ENCODE measurements at regions of chr11 and their contacts with region 1.

Region 1: GRCh38 chr11:129695575-129696308 is 119.9 kb upstream of the TMEM45B start:
- DNase-seq: peak; percentile 87
- ATAC-seq: peak; percentile 94
- H3K4me3 Mint-ChIP-seq: peak overlapping the region; percentile 66
- H3K27ac Mint-ChIP-seq: no peak overlapping the region
- H3K4me1 Mint-ChIP-seq: no peaks in the 10 kb centered on the region
- H3K27me3 Mint-ChIP-seq: peaks cover 12% of the 10 kb centered on the region
- CTCF ChIP-seq: peak; percentile 81

Region 2: DNA sequence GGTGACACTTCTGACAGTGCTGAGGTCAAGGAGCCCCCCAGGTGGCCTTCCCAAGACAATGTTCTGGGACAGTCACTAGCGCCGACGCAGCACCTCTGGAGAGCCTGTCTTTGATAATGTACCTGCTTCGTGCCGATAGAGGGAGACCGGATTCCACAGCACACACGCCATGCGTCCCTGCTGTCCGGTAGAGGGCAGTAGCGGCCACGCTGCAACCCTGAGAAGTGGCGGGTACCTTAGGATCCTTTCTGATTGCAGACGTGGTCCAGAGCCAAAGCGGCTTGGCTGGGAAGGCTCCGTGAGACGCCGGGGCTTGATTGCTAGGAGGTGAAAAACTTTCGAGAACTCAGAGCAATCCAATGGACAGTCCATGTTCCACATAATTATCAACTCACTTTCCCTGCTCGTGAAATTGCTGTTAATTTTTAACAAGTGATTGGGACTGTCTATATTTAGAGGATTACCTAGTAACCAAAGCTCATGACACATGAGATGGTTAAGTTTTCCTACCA is 331.5 kb before region 1 on chr11:
- CTCF ChIA-PET with region 1: interaction called, 15 read pairs
- POLR2A ChIA-PET with region 1: no interaction called
- DNase-seq: peak; percentile 92
- ATAC-seq: peak; percentile 100
- H3K4me3 Mint-ChIP-seq: no peak overlapping the region
- H3K27ac Mint-ChIP-seq: no peak overlapping the region
- H3K4me1 Mint-ChIP-seq: 0 out of 2 replicates have a peak, but pooled peaks cover 4% of the 10 kb centered on the region
- H3K27me3 Mint-ChIP-seq: peaks cover 32% of the 10 kb centered on the region
- CTCF ChIP-seq: peak; percentile 90

Region 3: GRCh38 chr11:129375751-129376657 is 319.7 kb before region 1 on chr11 and contains the start of gene BARX2:
- CTCF ChIA-PET with region 1: interaction called, 52 read pairs
- POLR2A ChIA-PET with region 1: no interaction called
- DNase-seq: peak; percentile 74
- ATAC-seq: peak; percentile 61
- H3K4me3 Mint-ChIP-seq: peak within 1 kb of the TSS; percentile 76
- H3K27ac Mint-ChIP-seq: no peak within 1 kb of the TSS
- H3K4me1 Mint-ChIP-seq: peaks cover 27% of the 10 kb centered on the region
- H3K27me3 Mint-ChIP-seq: peaks cover 88% of the 10 kb centered on the region
- CTCF ChIP-seq: no peak
- total RNA-seq, gene BARX2: not detected in 3 replicates

Region 4: GRCh38 chr11:129574431-129574830 is 121.3 kb before region 1 on chr11:
- CTCF ChIA-PET with region 1: no interaction called
- POLR2A ChIA-PET with region 1: no interaction called
- DNase-seq: no peak
- ATAC-seq: no peak
- H3K4me3 Mint-ChIP-seq: no peak overlapping the region
- H3K27ac Mint-ChIP-seq: no peak overlapping the region
- H3K4me1 Mint-ChIP-seq: no peaks in the 10 kb centered on the region
- H3K27me3 Mint-ChIP-seq: no peaks in the 10 kb centered on the region; the same call in 1 of the 2 replicates
- CTCF ChIP-seq: no peak

Region 5: DNA sequence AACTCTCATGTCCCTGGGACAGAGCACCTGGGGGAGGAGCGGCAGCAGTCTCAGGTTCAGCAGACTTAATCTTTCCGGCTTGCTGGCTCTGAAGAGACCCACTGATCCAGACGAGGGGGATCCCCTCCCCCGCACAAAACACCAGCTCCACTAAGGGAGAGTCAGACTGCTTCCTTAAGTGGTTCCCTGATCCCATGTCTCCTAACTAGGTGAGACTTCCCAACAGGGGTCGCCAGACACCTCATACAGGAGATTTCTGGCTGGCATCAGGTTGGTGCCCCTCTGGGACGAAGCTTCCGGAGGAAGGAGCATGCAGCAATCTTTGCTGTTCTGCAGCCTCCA is 37.2 kb before region 1 on chr11:
- CTCF ChIA-PET with region 1: interaction called, 28 read pairs
- POLR2A ChIA-PET with region 1: no interaction called
- DNase-seq: peak; percentile 47
- ATAC-seq: peak; percentile 95
- H3K4me3 Mint-ChIP-seq: no peak overlapping the region
- H3K27ac Mint-ChIP-seq: no peak overlapping the region
- H3K4me1 Mint-ChIP-seq: peaks cover 10% of the 10 kb centered on the region
- H3K27me3 Mint-ChIP-seq: no peaks in the 10 kb centered on the region; the same call in 1 of the 2 replicates
- CTCF ChIP-seq: no peak

Region 6: DNA sequence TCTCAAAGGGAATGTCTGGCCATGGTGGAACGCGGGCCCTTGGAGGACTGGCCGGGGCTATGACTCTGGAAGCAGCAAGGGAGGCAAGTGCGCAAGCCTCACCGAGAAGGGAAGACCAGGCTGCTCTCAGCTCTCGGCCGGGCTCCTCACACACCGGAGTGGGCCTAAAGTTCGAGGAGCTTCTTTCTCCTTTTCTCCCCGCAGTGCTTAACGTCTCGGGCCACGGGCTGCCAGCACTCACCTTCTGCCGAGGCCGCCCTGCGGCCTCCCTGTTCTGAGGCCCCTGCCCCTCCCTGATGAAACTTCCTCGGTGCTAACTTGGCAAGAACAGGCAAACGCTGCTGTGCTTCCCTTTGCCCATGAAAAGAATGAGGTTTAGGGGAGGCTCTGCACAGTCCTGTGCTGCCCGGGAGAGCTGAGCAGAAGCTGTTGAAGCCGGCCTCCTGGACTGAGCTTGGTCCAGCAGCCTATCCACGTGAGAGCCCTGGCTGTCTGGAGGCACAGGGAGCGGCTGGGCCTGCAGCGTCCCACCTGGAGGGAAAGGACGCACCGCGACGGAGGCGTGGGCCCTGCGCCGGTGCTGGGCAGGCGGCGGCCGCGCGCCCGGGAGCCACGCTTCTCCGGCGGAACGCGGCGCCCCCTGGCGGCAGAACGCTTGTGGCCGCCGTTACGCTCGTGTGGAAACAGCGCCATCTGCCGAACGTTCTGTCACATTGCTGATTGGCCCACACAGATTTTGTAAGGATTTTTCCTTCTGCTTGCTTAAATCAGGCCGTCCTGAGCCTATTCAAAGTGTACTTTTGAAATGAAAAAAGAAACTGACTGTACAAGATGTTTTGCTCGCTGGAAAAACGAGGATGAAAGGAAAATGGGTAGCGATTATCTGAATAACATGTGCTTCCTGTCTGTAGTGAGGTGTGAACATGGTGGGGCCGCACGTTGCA is 54.9 kb after region 1 on chr11:
- CTCF ChIA-PET with region 1: interaction called, 25 read pairs
- POLR2A ChIA-PET with region 1: no interaction called
- DNase-seq: peak; percentile 74
- ATAC-seq: peak; percentile 94
- H3K4me3 Mint-ChIP-seq: peak overlapping the region; percentile 56
- H3K27ac Mint-ChIP-seq: no peak overlapping the region
- H3K4me1 Mint-ChIP-seq: no peaks in the 10 kb centered on the region
- H3K27me3 Mint-ChIP-seq: peaks cover 21% of the 10 kb centered on the region
- CTCF ChIP-seq: peak; percentile 100